ENCODE measurements at regions of chr6 and their contacts with region 1.

Region 1: GRCh38 chr6:128520436-128521281 is at the start of gene PTPRK:
- DNase-seq: peak; percentile 59
- H3K4me3 ChIP-seq: peak within 1 kb of the TSS; percentile 70
- H3K27me3 ChIP-seq: no peaks in the 10 kb centered on the region
- CTCF ChIP-seq: no peak
- polyA plus RNA-seq, gene PTPRK: 18.5 and 31.4 TPM in 2 replicates

Region 2: DNA sequence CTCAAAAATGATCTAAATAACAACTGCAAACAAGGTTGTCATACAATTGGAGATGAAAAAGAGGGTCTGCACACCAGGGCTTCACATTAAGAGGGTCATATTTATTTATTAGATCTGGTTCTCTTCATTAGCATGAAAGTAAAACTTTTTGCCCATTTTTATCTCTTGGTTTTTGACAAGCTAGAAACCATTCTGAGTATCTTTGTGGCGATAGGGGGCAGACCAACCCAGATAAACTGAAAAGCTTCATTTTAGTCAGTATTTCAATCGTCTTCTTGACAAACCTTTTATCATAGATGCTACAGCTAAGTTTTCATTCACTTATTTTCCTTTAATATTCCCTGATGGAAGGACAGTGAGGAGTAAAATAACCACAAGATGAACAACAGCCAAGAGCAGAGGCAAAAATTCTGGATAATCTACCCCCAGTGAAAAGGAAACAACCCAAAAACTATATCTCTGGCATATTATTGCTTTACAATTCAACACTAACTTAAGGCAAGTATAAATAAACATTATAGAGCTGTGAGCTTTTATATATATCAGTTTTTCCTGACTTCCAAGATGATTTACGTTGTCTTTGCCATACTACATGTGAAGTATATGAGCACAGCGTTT is 665.0 kb before region 1 on chr6:
- CTCF ChIA-PET with region 1: interaction called, 14 read pairs
- POLR2A ChIA-PET with region 1: no interaction called
- DNase-seq: no peak
- H3K4me3 ChIP-seq: no peak overlapping the region
- H3K27me3 ChIP-seq: no peaks in the 10 kb centered on the region
- CTCF ChIP-seq: peak; percentile 64

Region 3: DNA sequence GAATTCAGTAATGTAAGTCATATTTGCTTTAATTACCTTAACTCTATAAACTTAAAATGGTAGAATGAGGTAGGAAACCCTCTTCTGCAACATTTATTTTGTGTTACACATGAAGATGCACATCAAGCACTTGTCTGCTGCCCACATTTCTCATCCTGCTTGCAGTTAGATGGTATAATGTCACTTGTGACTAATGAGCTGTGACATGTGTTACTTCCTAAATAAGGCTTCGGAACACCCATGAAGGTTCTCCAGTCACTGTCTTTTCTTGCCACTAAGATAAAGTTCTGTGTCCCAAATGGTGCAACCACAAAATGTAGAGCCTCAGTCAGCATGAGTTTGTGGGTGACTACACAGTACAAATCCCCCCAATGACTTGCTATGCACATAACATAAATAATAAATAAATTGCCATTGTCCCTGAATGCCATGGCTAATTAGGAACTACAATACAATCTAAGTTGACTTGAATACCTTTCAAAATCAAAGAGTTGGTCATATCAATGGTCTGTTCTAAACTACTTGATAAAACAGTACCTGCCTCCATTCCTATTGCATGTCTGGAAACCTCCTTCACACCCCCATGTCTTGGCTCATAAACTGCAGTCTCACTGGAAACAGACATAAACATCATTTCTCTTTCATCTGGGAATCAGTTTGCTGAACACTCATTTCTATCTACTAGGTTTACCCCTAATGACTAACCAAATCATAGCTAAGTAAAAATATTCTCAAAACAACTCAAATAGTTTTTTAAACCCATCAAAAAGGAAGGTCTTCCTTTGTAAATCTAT is 157.4 kb before region 1 on chr6:
- CTCF ChIA-PET with region 1: no interaction called
- POLR2A ChIA-PET with region 1: no interaction called
- DNase-seq: no peak
- H3K4me3 ChIP-seq: no peak overlapping the region
- H3K27me3 ChIP-seq: no peaks in the 10 kb centered on the region
- CTCF ChIP-seq: no peak

Measured in BJ (cell line).